ENCODE measurements at regions of chr11 and their contacts with region 1.

Region 1: GRCh38 chr11:72762641-72763304 is 10.6 kb upstream of the ARAP1 start:
- DNase-seq: no peak
- H3K4me3 ChIP-seq: no peak overlapping the region
- H3K27ac ChIP-seq: no peak overlapping the region
- H3K4me1 ChIP-seq: peaks cover 0 to 14% (median 8%) of the 10 kb centered on the region in 4 experiments; a peak in 6 of 7 replicates
- H3K27me3 ChIP-seq: no peaks in the 10 kb centered on the region
- CTCF ChIP-seq: no peak
- EP300 ChIP-seq: no peak
- POLR2A ChIP-seq: no peak
- RAD21 ChIP-seq: no peak

Region 2: GRCh38 chr11:72378704-72379384 is 383.9 kb before region 1 on chr11:
- CTCF ChIA-PET with region 1: no interaction called
- POLR2A ChIA-PET with region 1: no interaction called
- DNase-seq: no peak
- H3K4me3 ChIP-seq: no peak overlapping the region
- H3K27ac ChIP-seq: no peak overlapping the region
- H3K4me1 ChIP-seq: 0 out of 7 replicates have a peak, but pooled peaks cover 0 to 4% (median 0%) of the 10 kb centered on the region in 4 experiments
- H3K27me3 ChIP-seq: no peaks in the 10 kb centered on the region
- CTCF ChIP-seq: no peak
- EP300 ChIP-seq: no peak
- POLR2A ChIP-seq: no peak
- RAD21 ChIP-seq: no peak

Region 3: GRCh38 chr11:72772978-72773690 is 10.4 kb after region 1 on chr11:
- CTCF ChIA-PET with region 1: interaction called, 16 read pairs
- POLR2A ChIA-PET with region 1: interaction called, 10 read pairs
- DNase-seq: no peak
- H3K4me3 ChIP-seq: no peak overlapping the region
- H3K27ac ChIP-seq: no peak overlapping the region
- H3K4me1 ChIP-seq: peaks cover 0 to 8% (median 7%) of the 10 kb centered on the region in 4 experiments; a peak in 4 of 7 replicates
- H3K27me3 ChIP-seq: no peaks in the 10 kb centered on the region
- CTCF ChIP-seq: no peak
- EP300 ChIP-seq: no peak
- POLR2A ChIP-seq: no peak
- RAD21 ChIP-seq: no peak

Measured in H1 (cell line).